ENCODE measurements at regions of chr5 and their contacts with region 1.

Region 1: DNA sequence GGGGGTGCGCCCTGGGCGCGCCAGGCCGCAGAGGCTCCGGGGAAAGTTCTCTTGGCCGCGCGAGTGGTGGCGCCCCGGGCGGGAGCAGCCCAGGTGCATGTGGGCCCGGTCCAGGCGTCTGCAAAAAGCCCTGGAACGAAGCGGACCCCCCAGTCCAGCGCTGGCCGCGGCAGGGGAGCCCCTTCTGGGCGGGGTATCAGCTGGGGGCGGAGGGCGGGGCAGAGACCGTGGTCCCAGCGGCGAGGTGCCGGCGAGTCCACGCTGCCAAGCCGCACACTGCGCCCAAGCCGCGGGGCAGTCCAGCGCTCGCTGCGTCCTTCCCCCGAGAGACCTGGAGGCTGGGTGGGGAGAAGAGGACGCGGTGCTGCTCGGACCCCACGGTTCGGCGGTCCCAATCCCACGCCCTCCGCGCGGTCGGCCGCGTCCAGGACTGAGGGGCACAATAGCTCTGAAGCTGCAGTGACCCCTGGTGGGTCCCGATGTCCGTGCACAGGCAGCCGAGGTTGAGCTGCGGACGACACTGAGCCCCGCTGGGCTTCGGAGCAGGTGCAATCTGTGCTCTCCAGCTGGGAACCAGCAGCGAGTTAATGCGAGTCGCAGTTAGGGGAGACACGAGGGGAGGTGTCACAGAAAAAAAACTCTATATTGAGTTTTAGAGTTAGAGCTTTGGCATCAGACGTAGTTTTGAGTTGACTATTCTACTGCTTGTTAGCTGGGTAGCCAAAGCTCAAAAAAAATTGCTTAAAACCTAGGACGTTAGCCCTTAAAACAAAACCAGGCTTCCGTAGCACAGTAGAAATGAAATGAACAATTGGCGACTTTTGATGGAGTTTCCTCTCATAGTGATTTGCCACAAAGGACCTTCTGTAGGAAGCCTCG is 1.1 kb upstream of the EPB41L4A start:
- DNase-seq: peak; percentile 86 to 92 (median 90)
- ATAC-seq: peak; percentile 89
- H3K4me3 ChIP-seq: peak overlapping the region; percentile 64
- H3K4me1 ChIP-seq: no peaks in the 10 kb centered on the region
- CTCF ChIP-seq: peak; percentile 80

Region 2: GRCh38 chr5:112174959-112175594 is 245.1 kb before region 1 on chr5:
- intact Hi-C with region 1: loop called in 1 of 2 experiments (anchors 10 kb)
- DNase-seq: peak in 1 of 3 donors; percentile 64
- ATAC-seq: peak; percentile 69
- H3K4me3 ChIP-seq: no peak overlapping the region
- H3K4me1 ChIP-seq: no peaks in the 10 kb centered on the region
- CTCF ChIP-seq: peak; percentile 40

Measured in mucosa of descending colon (tissue), 3 donors.